Mammary epithelial cell (primary cell): ENCODE measurements at regions of chr15 and their contacts with region 1.

Region 1: GRCh38 chr15:84570164-84570735 is 30.6 kb upstream of the ZSCAN2 start:
- DNase-seq: peak; percentile 35
- H3K4me3 ChIP-seq: peak overlapping the region; percentile 53 to 85 (median 71)
- H3K27ac ChIP-seq: peak overlapping the region; percentile 44
- H3K4me1 ChIP-seq: peaks cover 2% of the 10 kb centered on the region
- H3K27me3 ChIP-seq: no peaks in the 10 kb centered on the region
- CTCF ChIP-seq: no peak

Region 2: DNA sequence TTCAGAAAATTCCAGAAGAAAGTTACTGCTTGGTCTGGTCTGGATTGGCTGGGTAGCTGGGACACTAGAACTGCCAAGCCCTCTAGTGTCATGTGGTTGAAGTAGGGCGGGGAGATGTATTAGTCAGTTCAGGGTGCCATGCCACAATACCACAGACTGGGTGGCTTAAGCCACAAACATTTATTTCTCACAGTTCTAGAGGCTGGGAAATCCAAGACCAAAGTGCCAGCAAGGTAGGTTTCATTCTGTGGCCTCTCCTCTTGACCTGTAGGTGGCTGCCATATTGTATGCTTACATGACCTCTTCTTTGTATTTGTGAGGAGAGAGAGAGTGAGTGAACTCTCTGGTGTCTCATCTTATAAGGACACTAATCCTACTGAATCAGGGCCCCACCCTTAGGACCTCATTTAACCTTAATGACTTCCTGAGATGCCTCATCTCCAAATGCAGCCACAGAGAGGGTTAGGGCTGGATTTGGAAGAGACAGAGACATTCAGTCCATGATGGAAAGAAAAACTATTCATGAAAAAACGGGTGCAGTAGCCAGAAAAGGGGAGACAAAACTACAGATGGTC is 12.4 kb after region 1 on chr15:
- CTCF ChIA-PET with region 1: interaction called, 10 read pairs
- dilution Hi-C with region 1: no loop called
- in situ Hi-C with region 1: no loop called
- intact Hi-C with region 1: no loop called
- DNase-seq: peak; percentile 88
- H3K4me3 ChIP-seq: no peak overlapping the region
- H3K27ac ChIP-seq: no peak overlapping the region
- H3K4me1 ChIP-seq: peaks cover 30% of the 10 kb centered on the region
- H3K27me3 ChIP-seq: no peaks in the 10 kb centered on the region
- CTCF ChIP-seq: no peak

Region 3: GRCh38 chr15:84633311-84634227 is 63.3 kb after region 1 on chr15:
- CTCF ChIA-PET with region 1: interaction called, 10 read pairs
- dilution Hi-C with region 1: no loop called
- in situ Hi-C with region 1: no loop called
- intact Hi-C with region 1: no loop called
- DNase-seq: peak; percentile 79
- H3K4me3 ChIP-seq: peak overlapping the region; percentile 39 to 67 (median 66)
- H3K27ac ChIP-seq: peak overlapping the region; percentile 47
- H3K4me1 ChIP-seq: peaks cover 11% of the 10 kb centered on the region
- H3K27me3 ChIP-seq: no peaks in the 10 kb centered on the region
- CTCF ChIP-seq: no peak